ENCODE measurements at regions of chr19 and their contacts with region 1.

Region 1: GRCh38 chr19:41641879-41642485 is 15.1 kb upstream of the CEACAM4 start:
- DNase-seq: peak; percentile 78 to 99
- ATAC-seq: peak; percentile 94 to 99
- H3K4me3 ChIP-seq: no peak overlapping the region
- H3K27ac ChIP-seq: no peak overlapping the region
- H3K4me1 ChIP-seq: no peaks in the 10 kb centered on the region
- CTCF ChIP-seq: peak; percentile 99
- EP300 ChIP-seq: no peak
- POLR2A ChIP-seq: no peak
- RAD21 ChIP-seq: peak; percentile 95 to 98

Region 2: DNA sequence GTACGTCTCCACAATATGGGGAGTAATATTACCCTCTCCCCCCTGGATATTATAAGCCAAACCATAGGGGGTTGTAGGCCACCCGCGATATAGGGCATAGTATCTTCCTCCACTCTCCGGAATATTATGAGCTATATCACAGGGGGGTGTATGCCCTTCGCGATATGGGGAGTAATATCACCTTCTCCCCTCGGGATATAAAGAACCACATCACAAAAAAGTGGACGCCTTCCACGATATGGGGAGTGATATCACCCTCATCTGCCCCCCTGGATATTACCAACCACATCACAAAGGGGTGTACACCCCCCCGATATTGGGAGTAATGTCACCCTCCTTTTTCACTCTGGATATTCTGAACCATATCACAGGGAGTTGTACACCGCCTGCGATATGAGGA is 131.5 kb before region 1 on chr19:
- CTCF ChIA-PET with region 1: no interaction called
- POLR2A ChIA-PET with region 1: no interaction called
- DNase-seq: no peak
- ATAC-seq: no peak
- H3K4me3 ChIP-seq: no peak overlapping the region
- H3K27ac ChIP-seq: no peak overlapping the region
- H3K4me1 ChIP-seq: no peaks in the 10 kb centered on the region
- CTCF ChIP-seq: no peak
- EP300 ChIP-seq: no peak
- POLR2A ChIP-seq: no peak; the same call in 1 of the 2 replicates
- RAD21 ChIP-seq: no peak

Region 3: GRCh38 chr19:41525989-41526388 is 116.0 kb before region 1 on chr19:
- CTCF ChIA-PET with region 1: no interaction called
- POLR2A ChIA-PET with region 1: no interaction called
- DNase-seq: no peak
- ATAC-seq: no peak
- H3K4me3 ChIP-seq: no peak overlapping the region
- H3K27ac ChIP-seq: no peak overlapping the region
- H3K4me1 ChIP-seq: peaks cover 10% of the 10 kb centered on the region; the same call in 2 of the 3 replicates
- CTCF ChIP-seq: no peak
- EP300 ChIP-seq: no peak
- POLR2A ChIP-seq: no peak
- RAD21 ChIP-seq: no peak

Region 4: DNA sequence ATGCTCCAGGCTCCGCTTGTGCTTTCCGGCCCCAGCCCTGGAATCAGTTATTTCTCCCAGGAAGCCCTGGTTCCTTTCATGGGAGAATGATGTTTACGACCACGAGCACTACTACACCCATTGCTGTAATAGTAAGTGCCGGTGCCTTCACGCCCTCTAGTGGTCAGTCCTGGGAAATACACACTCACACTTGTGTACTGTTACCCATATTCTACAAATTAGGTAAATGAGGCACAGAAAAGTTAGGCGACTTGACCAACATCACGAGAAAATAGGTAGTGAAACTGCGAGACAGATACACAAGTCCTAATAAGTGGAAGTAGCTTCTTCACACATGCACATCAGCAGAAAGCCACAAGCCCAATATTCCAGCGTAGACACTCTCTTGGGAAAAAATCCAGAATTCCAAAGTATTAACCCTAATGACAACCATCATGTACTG is 44.4 kb before region 1 on chr19:
- CTCF ChIA-PET with region 1: interaction called, 23 read pairs
- POLR2A ChIA-PET with region 1: no interaction called
- DNase-seq: peak; percentile 85 to 99
- ATAC-seq: peak; percentile 70 to 90; a peak in 5 of 6 replicates
- H3K4me3 ChIP-seq: no peak overlapping the region
- H3K27ac ChIP-seq: no peak overlapping the region
- H3K4me1 ChIP-seq: no peaks in the 10 kb centered on the region
- CTCF ChIP-seq: peak; percentile 99
- EP300 ChIP-seq: no peak
- POLR2A ChIP-seq: no peak
- RAD21 ChIP-seq: peak; percentile 44 to 54; a peak in 3 of 5 replicates

Region 5: DNA sequence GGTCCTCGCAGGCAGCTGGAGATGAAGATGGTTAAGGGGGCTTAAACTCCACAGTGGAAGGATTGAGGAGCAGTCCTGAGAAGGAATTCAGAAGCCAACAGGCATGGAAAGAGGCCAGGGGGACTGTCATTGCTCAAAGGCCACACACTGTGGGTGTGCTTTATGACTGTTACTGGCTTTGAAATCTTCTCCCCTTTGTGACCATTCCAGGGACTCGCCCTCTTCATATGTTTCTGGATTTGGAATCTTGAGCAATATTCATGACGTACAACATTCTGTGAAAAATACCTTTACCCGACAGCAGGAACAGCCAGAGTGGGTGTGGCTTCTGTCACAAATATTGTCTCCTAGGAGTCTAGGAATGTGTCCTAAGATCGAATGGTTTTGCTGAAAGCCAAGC is 29.5 kb after region 1 on chr19:
- CTCF ChIA-PET with region 1: interaction called, 44 read pairs
- POLR2A ChIA-PET with region 1: no interaction called
- DNase-seq: no peak
- ATAC-seq: no peak
- H3K4me3 ChIP-seq: no peak overlapping the region
- H3K27ac ChIP-seq: no peak overlapping the region
- H3K4me1 ChIP-seq: no peaks in the 10 kb centered on the region
- CTCF ChIP-seq: no peak
- EP300 ChIP-seq: no peak
- POLR2A ChIP-seq: no peak
- RAD21 ChIP-seq: no peak

Region 6: GRCh38 chr19:41714598-41714997 is 72.6 kb after region 1 on chr19:
- CTCF ChIA-PET with region 1: interaction called, 229 read pairs
- POLR2A ChIA-PET with region 1: no interaction called
- DNase-seq: no peak
- ATAC-seq: no peak
- H3K4me3 ChIP-seq: no peak overlapping the region
- H3K27ac ChIP-seq: no peak overlapping the region
- H3K4me1 ChIP-seq: no peaks in the 10 kb centered on the region
- CTCF ChIP-seq: no peak
- EP300 ChIP-seq: no peak
- POLR2A ChIP-seq: no peak
- RAD21 ChIP-seq: no peak

Region 7: DNA sequence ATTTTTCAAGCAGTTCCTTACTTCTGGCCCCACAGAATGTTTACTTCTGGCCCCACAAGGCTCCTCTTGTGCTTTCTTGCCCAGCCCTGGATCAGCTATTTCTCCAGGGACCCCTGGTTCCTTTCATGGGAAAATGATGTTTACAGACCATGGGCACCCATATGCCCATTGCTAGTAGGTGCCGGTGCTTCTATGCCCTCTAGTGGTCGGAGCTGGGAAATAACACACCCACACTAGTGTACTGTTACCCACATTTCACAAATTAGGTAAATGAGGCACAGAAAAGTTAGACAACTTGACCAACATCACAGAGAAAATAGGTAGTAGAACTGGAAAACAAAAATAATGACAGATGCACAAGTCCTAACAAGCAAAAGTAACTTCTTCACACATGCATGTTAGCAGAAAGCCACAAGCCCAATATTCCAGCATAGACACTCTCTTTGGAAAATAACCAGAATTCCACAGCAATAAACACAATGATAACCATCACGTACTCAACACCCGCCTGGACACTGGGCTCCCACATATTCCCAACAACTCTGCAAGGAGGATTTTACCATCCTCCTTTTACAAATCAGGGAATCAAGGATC is 112.1 kb after region 1 on chr19:
- CTCF ChIA-PET with region 1: interaction called, 261 read pairs
- POLR2A ChIA-PET with region 1: no interaction called
- DNase-seq: peak; percentile 47 to 69
- ATAC-seq: peak; percentile 61 to 91; a peak in 5 of 6 replicates
- H3K4me3 ChIP-seq: no peak overlapping the region
- H3K27ac ChIP-seq: no peak overlapping the region
- H3K4me1 ChIP-seq: no peaks in the 10 kb centered on the region
- CTCF ChIP-seq: peak; percentile 87
- EP300 ChIP-seq: no peak
- POLR2A ChIP-seq: no peak
- RAD21 ChIP-seq: peak; percentile 45 to 66

Region 8: DNA sequence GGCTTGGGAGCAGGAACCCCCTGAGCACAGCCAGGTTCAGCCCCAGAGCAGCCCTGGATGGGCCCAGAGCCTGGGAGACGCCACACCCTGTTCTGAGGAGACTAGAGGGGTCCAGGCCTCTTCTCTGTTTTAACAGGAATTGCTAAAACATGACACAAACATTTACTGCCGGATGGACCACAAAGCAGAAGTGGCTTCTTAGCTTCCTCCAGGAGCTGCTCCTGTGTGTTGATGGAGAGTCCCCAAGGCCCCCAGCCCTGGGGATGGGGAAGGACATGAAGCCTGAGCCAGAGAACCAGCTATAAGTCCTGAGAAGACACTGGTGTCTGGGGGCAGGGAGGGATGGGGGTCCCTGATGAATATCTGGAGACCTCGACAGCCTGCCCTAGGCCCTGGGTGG is 169.1 kb after region 1 on chr19:
- CTCF ChIA-PET with region 1: interaction called, 10 read pairs
- POLR2A ChIA-PET with region 1: no interaction called
- DNase-seq: no peak
- ATAC-seq: no peak
- H3K4me3 ChIP-seq: no peak overlapping the region
- H3K27ac ChIP-seq: no peak overlapping the region
- H3K4me1 ChIP-seq: no peaks in the 10 kb centered on the region
- CTCF ChIP-seq: no peak
- EP300 ChIP-seq: no peak
- POLR2A ChIP-seq: no peak
- RAD21 ChIP-seq: no peak

Measured in A549 (cell line).